ENCODE measurements at regions of chrX and their contacts with region 1.

Region 1: GRCh38 chrX:27575565-27575964 is 14.6 kb upstream of the DCAF8L2 start:
- DNase-seq: peak; percentile 11
- H3K4me3 ChIP-seq: no peak overlapping the region
- H3K27ac ChIP-seq: peak overlapping the region; percentile 59
- H3K4me1 ChIP-seq: peaks cover 5% of the 10 kb centered on the region
- H3K27me3 ChIP-seq: no peaks in the 10 kb centered on the region
- CTCF ChIP-seq: no peak
- POLR2A ChIP-seq: no peak

Region 2: DNA sequence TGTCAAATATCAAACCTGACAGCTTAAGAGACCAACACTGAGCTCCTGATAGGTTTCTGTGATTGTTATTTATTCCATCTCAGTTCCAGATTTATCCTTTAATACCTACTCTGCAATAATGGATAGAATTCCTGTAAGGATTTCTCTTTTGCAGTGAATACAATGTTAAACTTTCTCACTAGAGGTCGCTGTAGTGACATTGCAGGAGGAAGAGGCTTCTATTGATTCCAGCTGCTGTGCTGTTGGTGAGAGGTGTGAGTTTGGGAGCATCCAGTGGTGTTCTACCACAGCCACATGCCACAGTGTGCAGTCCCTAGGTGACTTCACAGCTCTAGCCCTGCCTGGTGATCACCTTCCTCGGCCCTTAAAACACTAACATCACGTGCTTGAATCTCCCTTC is 20.1 kb before region 1 on chrX:
- CTCF ChIA-PET with region 1: no interaction called
- POLR2A ChIA-PET with region 1: no interaction called
- dilution Hi-C with region 1: no loop called
- intact Hi-C with region 1: no loop called
- DNase-seq: peak; percentile 38
- H3K4me3 ChIP-seq: no peak overlapping the region
- H3K27ac ChIP-seq: no peak overlapping the region
- H3K4me1 ChIP-seq: no peaks in the 10 kb centered on the region
- H3K27me3 ChIP-seq: no peaks in the 10 kb centered on the region
- CTCF ChIP-seq: peak; percentile 30 to 35
- POLR2A ChIP-seq: no peak

Region 3: DNA sequence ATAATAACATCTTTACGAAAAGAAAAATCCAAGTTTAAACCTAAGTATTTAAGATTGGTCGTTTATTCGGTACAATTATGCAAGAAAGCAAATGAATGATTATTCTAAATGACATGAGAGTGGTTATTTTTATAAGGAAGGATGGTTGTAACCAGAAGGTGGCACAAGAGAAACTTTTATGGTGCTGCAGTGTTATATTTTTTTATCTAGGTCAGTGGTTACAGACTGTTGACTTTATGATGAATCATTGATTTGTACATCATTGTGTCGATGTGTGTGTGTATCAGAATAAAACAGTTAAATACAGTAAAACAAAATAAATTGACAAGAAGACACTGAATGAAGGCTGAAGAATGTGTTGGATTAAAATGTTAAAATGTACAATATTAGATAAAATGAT is 24.4 kb after region 1 on chrX:
- CTCF ChIA-PET with region 1: no interaction called
- POLR2A ChIA-PET with region 1: no interaction called
- dilution Hi-C with region 1: no loop called
- intact Hi-C with region 1: loop called (anchors 2 kb)
- DNase-seq: peak; percentile 70
- H3K4me3 ChIP-seq: no peak overlapping the region
- H3K27ac ChIP-seq: peak overlapping the region; percentile 50
- H3K4me1 ChIP-seq: peaks cover 9% of the 10 kb centered on the region
- H3K27me3 ChIP-seq: no peaks in the 10 kb centered on the region
- CTCF ChIP-seq: no peak
- POLR2A ChIP-seq: no peak